ENCODE measurements at regions of chr17 and their contacts with region 1.

Region 1: GRCh38 chr17:81553018-81553615 is 964 bp upstream of the FAAP100 start:
- H3K4me3 Mint-ChIP-seq: peak overlapping the region; percentile 92
- H3K27ac Mint-ChIP-seq: peak overlapping the region; percentile 90
- H3K4me1 Mint-ChIP-seq: peaks cover 63% of the 10 kb centered on the region
- H3K27me3 Mint-ChIP-seq: no peaks in the 10 kb centered on the region

Region 2: GRCh38 chr17:81484195-81484979 is 68.7 kb before region 1 on chr17:
- intact Hi-C with region 1: no loop called
- H3K4me3 Mint-ChIP-seq: peak overlapping the region; percentile 51
- H3K27ac Mint-ChIP-seq: no peak overlapping the region
- H3K4me1 Mint-ChIP-seq: peaks cover 35% of the 10 kb centered on the region
- H3K27me3 Mint-ChIP-seq: peaks cover 55% of the 10 kb centered on the region

Region 3: DNA sequence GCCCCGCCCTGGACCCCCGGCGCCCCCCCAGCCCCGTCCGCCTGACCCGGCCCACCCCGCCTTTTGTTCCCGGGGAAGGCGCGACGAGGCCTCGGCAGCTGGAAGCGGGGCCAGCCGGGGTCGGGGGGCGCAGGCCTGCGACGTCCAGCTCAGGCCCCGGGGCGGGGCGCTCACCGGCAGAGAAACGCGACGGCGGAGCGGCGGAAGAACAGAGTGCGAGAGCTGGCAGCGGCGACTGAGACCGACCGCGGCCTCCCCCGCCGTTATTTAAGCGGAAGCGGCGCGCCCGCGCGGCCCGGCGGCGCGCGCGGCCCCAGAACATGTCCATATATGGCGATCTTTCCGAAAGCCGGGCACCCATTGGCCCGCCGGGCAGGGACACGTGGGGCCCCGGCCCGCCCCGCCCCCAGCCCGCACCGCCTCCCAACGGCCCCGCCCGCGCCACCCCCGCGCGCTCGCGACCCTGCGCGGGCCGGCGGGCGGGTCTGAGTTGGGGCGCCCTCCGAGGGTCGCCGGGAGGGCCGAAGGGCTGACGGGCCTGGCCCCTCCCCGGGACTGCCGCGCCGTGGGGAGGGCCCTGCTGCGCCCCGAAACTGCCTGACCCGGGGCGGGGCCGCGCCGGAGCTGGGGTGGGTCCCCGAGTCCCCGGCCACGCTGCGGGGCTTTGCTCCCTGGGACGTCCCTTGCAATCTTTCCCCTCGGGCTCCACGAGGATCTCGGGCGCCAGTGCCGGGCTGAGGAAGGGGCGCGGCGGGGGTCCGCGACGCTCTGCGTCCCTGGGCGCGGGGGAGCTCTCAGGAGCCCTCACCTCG is 40.4 kb before region 1 on chr17 and contains the start of gene ACTG1:
- intact Hi-C with region 1: loop called (anchors 2 kb)
- H3K4me3 Mint-ChIP-seq: peak within 1 kb of the TSS; percentile 99
- H3K27ac Mint-ChIP-seq: peak within 1 kb of the TSS; percentile 88
- H3K4me1 Mint-ChIP-seq: peaks cover 69% of the 10 kb centered on the region
- H3K27me3 Mint-ChIP-seq: no peaks in the 10 kb centered on the region

Region 4: GRCh38 chr17:81601525-81602120 is 48.5 kb after region 1 on chr17:
- intact Hi-C with region 1: loop called (anchors 2 kb)
- H3K4me3 Mint-ChIP-seq: no peak overlapping the region
- H3K27ac Mint-ChIP-seq: no peak overlapping the region
- H3K4me1 Mint-ChIP-seq: peaks cover 41% of the 10 kb centered on the region
- H3K27me3 Mint-ChIP-seq: no peaks in the 10 kb centered on the region

Measured in dendritic cell treated with granulocyte-macrophage colony-stimulating factor and Interleukin-4, amounts not matched to agents 40 ng/mL and 50 ng/mL, for 4 days (primary cell).